A549 (cell line): ENCODE measurements at regions of chr20 and their contacts with region 1.

Region 1: DNA sequence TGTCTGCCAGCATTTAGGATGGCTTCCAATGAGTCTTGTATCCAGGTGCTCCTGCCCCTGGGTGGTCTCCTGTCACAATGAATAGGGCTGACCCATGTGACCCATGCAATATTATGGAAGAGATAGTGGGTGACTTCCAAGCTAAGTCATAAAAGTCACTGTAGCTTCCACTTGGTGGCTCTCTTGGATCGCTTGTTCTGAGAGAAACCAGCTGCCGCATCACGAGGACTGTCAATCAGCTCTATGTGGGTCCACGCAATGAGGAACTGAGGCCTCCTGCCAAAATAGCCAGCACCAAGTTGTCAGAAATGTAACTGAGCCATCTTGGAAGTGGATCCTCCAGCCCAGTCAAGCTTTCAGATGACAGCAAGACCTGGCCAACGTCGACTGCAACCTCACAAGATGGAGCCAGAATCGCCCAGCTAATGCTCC is 14.9 kb upstream of the MATN4 start:
- DNase-seq: peak in 1 of 2 experiments; percentile 63
- ATAC-seq: peak; percentile 61 to 71
- H3K4me3 ChIP-seq: no peak overlapping the region
- H3K27ac ChIP-seq: no peak overlapping the region
- H3K4me1 ChIP-seq: no peaks in the 10 kb centered on the region; the same call in 2 of the 3 replicates
- CTCF ChIP-seq: peak; percentile 59
- EP300 ChIP-seq: no peak
- POLR2A ChIP-seq: no peak
- RAD21 ChIP-seq: peak; percentile 81 to 82

Region 2: GRCh38 chr20:45337367-45338120 is 14.6 kb after region 1 on chr20:
- CTCF ChIA-PET with region 1: interaction called, 82 read pairs
- POLR2A ChIA-PET with region 1: interaction called, 3 read pairs
- DNase-seq: peak in 1 of 2 experiments; percentile 59
- ATAC-seq: peak; percentile 41 to 63
- H3K4me3 ChIP-seq: peak overlapping the region; percentile 0; the same call in 1 of the 3 replicates
- H3K27ac ChIP-seq: peak overlapping the region; percentile 84 to 96
- H3K4me1 ChIP-seq: peaks cover 75% of the 10 kb centered on the region
- CTCF ChIP-seq: no peak
- EP300 ChIP-seq: 0 out of 5 replicates have a peak, but pooled peaks of 1 of the 2 experiments have one; percentile 21
- POLR2A ChIP-seq: no peak
- RAD21 ChIP-seq: no peak

Region 3: DNA sequence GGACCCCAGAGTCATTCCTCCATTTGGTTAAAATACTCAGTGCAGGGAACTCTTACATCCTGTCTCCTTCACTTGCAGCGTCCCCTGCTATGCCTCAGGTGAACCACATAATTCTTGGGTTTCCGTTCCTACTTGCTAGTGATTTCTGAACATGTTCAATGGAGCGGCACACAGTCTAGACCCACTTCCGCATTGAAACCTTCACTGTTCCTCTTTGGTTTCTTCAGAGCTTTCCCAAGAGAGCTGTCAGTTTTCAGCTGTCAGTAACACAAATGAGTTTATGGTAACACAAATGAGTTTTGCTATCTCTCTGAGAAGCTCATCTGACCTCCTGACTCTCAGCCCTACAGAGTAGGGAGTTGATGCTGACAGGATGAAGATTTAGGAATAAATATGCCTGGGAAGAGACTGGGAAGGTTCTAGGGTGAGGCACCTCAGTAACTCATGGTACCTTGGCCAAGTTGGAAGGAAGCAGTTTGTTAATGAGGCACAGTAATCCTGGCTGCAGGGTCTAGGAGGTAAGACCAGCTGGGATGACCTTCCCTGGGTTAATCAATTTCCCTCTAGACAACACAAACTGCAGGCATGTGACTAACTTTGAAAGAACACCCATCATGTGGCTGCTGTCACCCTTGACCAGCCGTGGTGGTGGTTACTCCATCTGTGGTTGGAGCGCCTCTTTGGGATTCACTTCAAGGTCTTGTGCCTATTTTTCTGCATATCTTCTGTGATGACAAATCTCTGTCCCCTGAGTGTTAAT is 45.4 kb after region 1 on chr20:
- CTCF ChIA-PET with region 1: interaction called, 67 read pairs
- POLR2A ChIA-PET with region 1: interaction called, 5 read pairs
- DNase-seq: no peak
- ATAC-seq: no peak
- H3K4me3 ChIP-seq: no peak overlapping the region
- H3K27ac ChIP-seq: no peak overlapping the region
- H3K4me1 ChIP-seq: peaks cover 4% of the 10 kb centered on the region; the same call in 1 of the 3 replicates
- CTCF ChIP-seq: no peak
- EP300 ChIP-seq: no peak
- POLR2A ChIP-seq: no peak
- RAD21 ChIP-seq: no peak

Region 4: DNA sequence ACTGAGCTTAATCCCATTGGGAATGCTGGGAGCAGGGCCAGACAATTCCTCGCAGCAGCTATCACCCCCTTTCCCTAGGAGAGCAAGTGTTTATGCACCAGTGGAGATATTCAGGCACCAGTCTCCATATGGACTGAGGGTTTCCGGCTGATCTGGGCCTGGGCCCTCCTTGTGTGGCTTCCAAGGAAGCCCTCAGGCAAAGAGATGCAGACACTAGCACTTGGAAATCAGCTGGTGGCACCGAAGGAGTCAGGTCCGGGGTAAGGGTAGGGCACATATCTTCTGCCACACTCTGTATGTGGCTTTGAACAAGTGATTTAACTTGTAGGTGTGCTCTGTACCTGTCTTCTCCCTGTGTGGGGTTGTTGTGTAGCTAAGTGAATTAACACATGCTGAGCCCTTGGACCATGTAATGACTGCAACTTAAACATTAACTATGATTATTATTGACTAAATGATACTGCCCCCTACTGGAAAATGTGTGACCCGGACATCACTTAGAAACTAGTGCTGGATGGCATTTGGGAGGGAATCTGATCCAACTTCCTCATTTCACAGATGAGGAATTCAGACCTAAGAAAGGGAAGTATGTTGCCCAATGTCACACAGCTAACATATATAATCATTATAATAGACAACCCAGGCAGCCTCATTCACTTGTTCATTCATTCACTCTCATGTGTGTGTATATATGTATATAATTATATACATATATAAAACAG is 127.3 kb after region 1 on chr20:
- CTCF ChIA-PET with region 1: interaction called, 77 read pairs
- POLR2A ChIA-PET with region 1: no interaction called
- DNase-seq: peak; percentile 28 to 56
- ATAC-seq: peak in 1 of 2 experiments; percentile 56; a peak in 3 of 6 replicates
- H3K4me3 ChIP-seq: no peak overlapping the region
- H3K27ac ChIP-seq: no peak overlapping the region
- H3K4me1 ChIP-seq: no peaks in the 10 kb centered on the region
- CTCF ChIP-seq: peak; percentile 62
- EP300 ChIP-seq: no peak
- POLR2A ChIP-seq: no peak
- RAD21 ChIP-seq: peak; percentile 37 to 51